ENCODE measurements at regions of chr3 and their contacts with region 1.

Region 1: GRCh38 chr3:183385698-183386613 is 42.5 kb downstream of the MCF2L2 start:
- DNase-seq: peak; percentile 75
- H3K4me3 Mint-ChIP-seq: no peak overlapping the region
- H3K27ac Mint-ChIP-seq: no peak overlapping the region
- H3K4me1 Mint-ChIP-seq: peaks cover 4% of the 10 kb centered on the region
- H3K27me3 Mint-ChIP-seq: no peaks in the 10 kb centered on the region

Region 2: DNA sequence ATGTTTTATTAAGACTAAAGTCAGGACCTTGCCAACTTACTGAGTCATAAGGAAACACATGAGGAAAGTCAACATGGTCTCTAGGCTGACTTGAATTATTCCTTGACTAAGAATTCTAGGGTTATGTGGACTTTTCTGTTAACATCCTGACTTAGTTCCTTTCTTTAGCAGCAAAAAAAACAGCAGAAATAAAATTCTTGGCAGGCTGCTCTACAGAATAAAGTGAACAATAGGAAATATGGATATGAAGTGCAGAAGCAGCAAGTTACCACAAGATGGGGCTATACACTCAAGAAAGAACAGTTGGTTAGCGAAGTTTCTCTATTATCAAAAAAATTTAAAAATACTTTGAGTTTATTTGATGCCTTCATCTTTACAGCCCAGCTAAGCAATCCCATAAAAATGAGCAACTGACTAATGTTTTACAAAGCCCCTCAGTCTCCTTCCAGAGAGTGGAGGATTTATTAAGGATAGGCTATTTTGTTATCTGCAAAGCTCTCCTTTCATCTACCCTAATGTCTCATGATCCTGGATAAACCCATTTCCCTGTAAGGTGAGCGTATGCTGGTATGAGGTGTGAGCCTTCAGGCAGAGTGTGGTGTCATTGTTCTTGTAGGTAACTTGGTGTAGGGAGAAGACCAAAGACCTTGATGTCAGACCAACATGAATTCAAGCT is 263.6 kb before region 1 on chr3:
- CTCF ChIA-PET with region 1: interaction called, 28 read pairs
- POLR2A ChIA-PET with region 1: no interaction called
- DNase-seq: peak; percentile 21
- H3K4me3 Mint-ChIP-seq: no peak overlapping the region
- H3K27ac Mint-ChIP-seq: no peak overlapping the region
- H3K4me1 Mint-ChIP-seq: peaks cover 1% of the 10 kb centered on the region
- H3K27me3 Mint-ChIP-seq: peaks cover 2% of the 10 kb centered on the region

Region 3: GRCh38 chr3:183185696-183186095 is 200.3 kb before region 1 on chr3:
- CTCF ChIA-PET with region 1: interaction called, 41 read pairs
- POLR2A ChIA-PET with region 1: no interaction called
- DNase-seq: no peak
- H3K4me3 Mint-ChIP-seq: no peak overlapping the region
- H3K27ac Mint-ChIP-seq: no peak overlapping the region
- H3K4me1 Mint-ChIP-seq: peaks cover 7% of the 10 kb centered on the region
- H3K27me3 Mint-ChIP-seq: no peaks in the 10 kb centered on the region

Region 4: GRCh38 chr3:183447206-183448001 is 61.4 kb after region 1 on chr3:
- CTCF ChIA-PET with region 1: no interaction called
- POLR2A ChIA-PET with region 1: no interaction called
- DNase-seq: peak; percentile 77
- H3K4me3 Mint-ChIP-seq: peak overlapping the region; percentile 94
- H3K27ac Mint-ChIP-seq: peak overlapping the region; percentile 85
- H3K4me1 Mint-ChIP-seq: peaks cover 24% of the 10 kb centered on the region
- H3K27me3 Mint-ChIP-seq: peaks cover 19% of the 10 kb centered on the region

Region 5: DNA sequence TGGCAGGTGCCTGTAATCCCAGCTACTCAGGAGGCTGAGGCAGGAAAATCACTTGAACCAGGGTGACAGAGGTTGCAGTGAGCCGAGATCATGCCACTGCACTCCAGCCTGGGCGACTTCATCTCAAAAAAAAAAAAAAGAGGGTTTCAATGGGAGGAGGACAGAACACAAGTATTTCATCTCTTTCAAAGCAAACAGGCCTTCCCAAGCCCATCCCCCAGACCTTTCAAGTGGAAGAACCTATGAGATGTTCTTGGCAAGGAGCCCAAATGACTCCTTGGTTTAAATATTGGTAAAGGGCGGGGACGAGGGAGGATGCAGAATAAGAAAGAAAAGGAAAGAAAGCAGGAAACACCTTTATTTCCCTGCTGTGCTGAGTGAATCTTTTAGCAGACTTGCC is 104.7 kb after region 1 on chr3:
- CTCF ChIA-PET with region 1: no interaction called
- POLR2A ChIA-PET with region 1: no interaction called
- DNase-seq: peak; percentile 45
- H3K4me3 Mint-ChIP-seq: no peak overlapping the region
- H3K27ac Mint-ChIP-seq: peak overlapping the region; percentile 60
- H3K4me1 Mint-ChIP-seq: peaks cover 21% of the 10 kb centered on the region
- H3K27me3 Mint-ChIP-seq: no peaks in the 10 kb centered on the region

Measured in activated CD4-positive, alpha-beta T cell treated with anti-CD3 and anti-CD28 coated beads, Interleukin-2, amount 10 ng/mL, durations not matched to agents 7 days and 5 days (primary cell).